Naive thymus-derived CD4-positive, alpha-beta T cell (primary cell): ENCODE measurements at regions of chr6 and their contacts with region 1.

Region 1: DNA sequence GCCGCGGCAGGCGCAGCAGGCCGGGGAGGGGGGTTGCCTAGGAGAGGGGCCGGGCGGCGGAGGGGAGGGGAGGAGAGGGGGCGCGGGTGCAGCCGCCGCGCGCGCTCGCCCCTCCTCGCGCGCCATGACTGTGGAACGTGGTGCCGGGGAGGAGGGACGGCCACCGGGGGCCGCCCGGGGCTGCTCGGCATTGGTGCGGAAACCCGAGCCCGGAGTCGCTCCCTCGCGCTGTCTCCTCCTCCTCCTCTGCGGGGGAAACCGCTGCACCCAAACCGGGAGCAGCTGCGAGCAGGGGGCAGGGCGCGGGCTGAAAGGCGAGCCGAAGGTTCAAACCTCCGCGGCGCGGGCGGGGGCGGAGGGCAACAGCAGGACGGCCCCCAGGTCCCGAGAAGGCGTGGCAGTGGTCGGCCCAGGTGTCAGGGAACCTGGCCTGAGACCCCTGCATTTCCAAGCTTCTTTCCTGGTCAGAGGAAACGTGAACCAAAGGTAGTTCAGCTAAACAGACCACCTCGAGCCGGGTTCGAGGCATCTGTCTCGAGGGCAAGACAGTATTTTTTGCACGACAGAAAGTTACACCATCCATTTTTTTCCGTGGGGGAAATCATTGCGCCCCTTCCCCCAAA is 1.4 kb upstream of the TRERF1 start:
- DNase-seq: peak; percentile 47 to 80 (median 78)
- ATAC-seq: peak; percentile 85
- H3K4me3 ChIP-seq: peak overlapping the region; percentile 80
- H3K4me3 Mint-ChIP-seq: peak overlapping the region; percentile 84 to 100 (median 96)
- H3K27ac ChIP-seq: peak overlapping the region; percentile 56
- H3K27ac Mint-ChIP-seq: peak overlapping the region in 8 of 9 donors; percentile 11 to 93 (median 72)
- H3K4me1 ChIP-seq: peaks cover 4 to 20% of the 10 kb centered on the region in 2 donors
- H3K4me1 Mint-ChIP-seq: peaks cover 25 to 41% (median 33%) of the 10 kb centered on the region in 7 donors
- H3K27me3 ChIP-seq: no peaks in the 10 kb centered on the region
- H3K27me3 Mint-ChIP-seq: peaks cover 0 to 11% (median 0%) of the 10 kb centered on the region in 5 donors

Region 2: GRCh38 chr6:42050266-42051032 is 402.7 kb before region 1 on chr6 and contains the start of gene TAF8:
- CTCF ChIA-PET with region 1: no interaction called
- POLR2A ChIA-PET with region 1: interaction called, 3 read pairs
- intact Hi-C with region 1: loop called in 1 of 2 experiments (anchors 2 kb)
- DNase-seq: peak; percentile 76 to 89 (median 87)
- ATAC-seq: peak; percentile 80
- H3K4me3 ChIP-seq: peak within 1 kb of the TSS; percentile 98
- H3K4me3 Mint-ChIP-seq: peak within 1 kb of the TSS; percentile 89 to 99 (median 99)
- H3K27ac ChIP-seq: peak within 1 kb of the TSS; percentile 78
- H3K27ac Mint-ChIP-seq: peak within 1 kb of the TSS; percentile 93 to 98 (median 97)
- H3K4me1 ChIP-seq: peaks cover 24 to 27% of the 10 kb centered on the region in 2 donors
- H3K4me1 Mint-ChIP-seq: peaks cover 36 to 70% (median 51%) of the 10 kb centered on the region in 7 donors
- H3K27me3 ChIP-seq: no peaks in the 10 kb centered on the region
- H3K27me3 Mint-ChIP-seq: no peaks in the 10 kb centered on the region
- total RNA-seq, gene TAF8: 41.6 to 58.2 (median 50.8) TPM

Region 3: DNA sequence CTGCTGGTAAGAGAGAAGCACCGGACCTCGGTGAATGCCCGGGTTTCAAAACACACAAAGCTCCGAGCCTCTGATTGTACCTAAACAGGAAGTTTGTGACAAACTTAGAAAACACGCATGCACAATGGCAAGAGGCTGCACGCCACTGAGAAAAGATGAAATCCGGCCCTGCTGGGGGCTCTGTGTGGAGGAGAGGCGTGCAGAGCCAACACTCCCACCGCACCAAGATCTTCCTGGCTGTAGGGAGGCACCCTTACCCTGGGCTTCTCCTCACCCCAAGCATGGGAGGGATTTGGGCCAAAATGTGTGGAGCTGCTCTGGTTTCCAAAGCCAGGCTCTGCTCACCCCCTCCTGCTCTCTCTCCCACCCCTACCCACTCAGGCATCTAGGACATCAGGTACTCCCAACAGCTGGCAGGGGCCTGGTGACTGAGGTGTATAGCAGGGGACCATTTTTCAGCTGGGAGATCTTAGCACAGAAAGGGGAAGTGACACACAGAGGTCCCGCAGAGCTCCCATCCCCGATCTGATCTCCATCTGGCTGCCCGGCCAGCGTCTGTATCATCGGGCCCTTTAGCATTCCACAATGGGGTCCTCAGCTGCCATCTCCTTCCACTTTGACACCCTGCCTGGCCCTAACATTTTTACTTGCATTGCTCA is 85.7 kb before region 1 on chr6:
- CTCF ChIA-PET with region 1: no interaction called
- POLR2A ChIA-PET with region 1: interaction called, 49 read pairs
- intact Hi-C with region 1: loop called (anchors 1 kb)
- DNase-seq: peak in 4 of 9 donors; percentile 22 to 35 (median 32)
- ATAC-seq: peak; percentile 70
- H3K4me3 ChIP-seq: peak overlapping the region; percentile 42
- H3K4me3 Mint-ChIP-seq: peak overlapping the region; percentile 68 to 87 (median 80)
- H3K27ac ChIP-seq: peak overlapping the region; percentile 58
- H3K27ac Mint-ChIP-seq: peak overlapping the region; percentile 80 to 98 (median 94)
- H3K4me1 ChIP-seq: peaks cover 48 to 68% of the 10 kb centered on the region in 2 donors
- H3K4me1 Mint-ChIP-seq: peaks cover 63 to 84% (median 73%) of the 10 kb centered on the region in 7 donors
- H3K27me3 ChIP-seq: no peaks in the 10 kb centered on the region
- H3K27me3 Mint-ChIP-seq: no peaks in the 10 kb centered on the region

Region 4: GRCh38 chr6:42423244-42423643 is 29.9 kb before region 1 on chr6:
- CTCF ChIA-PET with region 1: interaction called, 4 read pairs
- POLR2A ChIA-PET with region 1: interaction called, 21 read pairs
- intact Hi-C with region 1: loop called in 1 of 2 experiments (anchors 2 kb)
- DNase-seq: peak in 1 of 9 donors; percentile 21
- ATAC-seq: peak; percentile 26
- H3K4me3 ChIP-seq: peak overlapping the region; percentile 8
- H3K4me3 Mint-ChIP-seq: peak overlapping the region; percentile 54 to 88 (median 74)
- H3K27ac ChIP-seq: no peak overlapping the region
- H3K27ac Mint-ChIP-seq: peak overlapping the region in 8 of 9 donors; percentile 18 to 89 (median 68)
- H3K4me1 ChIP-seq: peaks cover 34 to 38% of the 10 kb centered on the region in 2 donors
- H3K4me1 Mint-ChIP-seq: peaks cover 46 to 80% (median 70%) of the 10 kb centered on the region in 7 donors
- H3K27me3 ChIP-seq: no peaks in the 10 kb centered on the region
- H3K27me3 Mint-ChIP-seq: no peaks in the 10 kb centered on the region

Region 5: GRCh38 chr6:42532038-42532669 is 79.0 kb after region 1 on chr6:
- CTCF ChIA-PET with region 1: interaction called, 5 read pairs
- POLR2A ChIA-PET with region 1: interaction called, 6 read pairs
- intact Hi-C with region 1: loop called (anchors 1 to 5 kb)
- DNase-seq: peak in 7 of 9 donors; percentile 15 to 50 (median 39)
- ATAC-seq: peak; percentile 47
- H3K4me3 ChIP-seq: no peak overlapping the region
- H3K4me3 Mint-ChIP-seq: no peak overlapping the region
- H3K27ac ChIP-seq: no peak overlapping the region
- H3K27ac Mint-ChIP-seq: no peak overlapping the region
- H3K4me1 ChIP-seq: no peaks in the 10 kb centered on the region
- H3K4me1 Mint-ChIP-seq: no peaks in the 10 kb centered on the region
- H3K27me3 ChIP-seq: no peaks in the 10 kb centered on the region
- H3K27me3 Mint-ChIP-seq: no peaks in the 10 kb centered on the region

Region 6: DNA sequence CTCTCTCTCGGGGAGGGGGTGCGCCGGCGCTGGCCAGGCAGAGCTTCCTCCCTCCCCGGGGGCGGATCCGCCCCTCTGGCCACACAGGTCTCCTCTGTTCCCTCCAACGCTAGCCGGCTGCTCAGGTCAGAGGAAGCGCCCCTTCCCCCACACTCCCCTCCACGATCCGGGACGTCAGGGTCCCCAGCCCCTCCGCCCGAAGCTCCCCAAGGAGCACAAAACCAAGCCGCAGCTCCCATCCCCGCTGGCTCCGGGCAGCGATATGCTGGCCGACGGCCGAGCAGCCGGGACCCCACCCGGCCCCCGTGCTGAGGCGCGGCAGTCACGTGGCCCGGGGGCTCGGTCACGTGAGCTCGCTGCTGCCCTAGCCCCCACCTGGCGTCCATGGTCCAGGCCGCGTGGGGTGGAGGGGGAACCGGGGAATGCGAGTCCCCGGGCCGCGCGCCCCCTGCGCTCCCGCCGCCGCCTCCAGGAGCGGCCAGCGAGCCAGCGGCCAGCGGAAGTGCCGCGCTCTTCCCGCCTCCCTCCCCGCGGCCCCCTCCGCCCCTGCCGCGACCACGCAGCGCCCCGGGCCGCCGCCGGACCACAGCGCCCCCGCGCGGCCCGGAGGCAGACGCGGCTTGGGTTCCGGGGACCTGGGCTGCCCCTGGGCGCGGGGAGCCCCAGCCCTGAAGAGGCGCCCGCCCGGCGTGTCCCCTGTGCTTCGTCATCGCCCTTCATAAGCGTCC is 1804.0 kb after region 1 on chr6 and contains the start of gene SLC35B2:
- CTCF ChIA-PET with region 1: no interaction called
- POLR2A ChIA-PET with region 1: no interaction called
- intact Hi-C with region 1: loop called in 1 of 2 experiments (anchors 5 kb)
- DNase-seq: peak; percentile 53 to 83 (median 69)
- ATAC-seq: peak; percentile 87
- H3K4me3 ChIP-seq: peak within 1 kb of the TSS; percentile 74
- H3K4me3 Mint-ChIP-seq: peak within 1 kb of the TSS; percentile 80 to 94 (median 92)
- H3K27ac ChIP-seq: peak within 1 kb of the TSS; percentile 87
- H3K27ac Mint-ChIP-seq: peak within 1 kb of the TSS; percentile 75 to 97 (median 89)
- H3K4me1 ChIP-seq: peaks cover 14 to 18% of the 10 kb centered on the region in 2 donors
- H3K4me1 Mint-ChIP-seq: peaks cover 21 to 64% (median 60%) of the 10 kb centered on the region in 7 donors
- H3K27me3 ChIP-seq: no peaks in the 10 kb centered on the region
- H3K27me3 Mint-ChIP-seq: no peaks in the 10 kb centered on the region
- total RNA-seq, gene SLC35B2: 10.0 to 32.1 (median 17.6) TPM